Tibial artery (tissue), 4 donors: ENCODE measurements at regions of chr19 and their contacts with region 1.

Region 1: GRCh38 chr19:9768175-9769112 is at the start of gene ZNF846:
- DNase-seq: peak; percentile 91 to 95
- H3K4me3 ChIP-seq: peak within 1 kb of the TSS; percentile 69 to 70
- H3K27ac ChIP-seq: peak within 1 kb of the TSS; percentile 93 to 95
- H3K4me1 ChIP-seq: peaks cover 0 to 18% (median 13%) of the 10 kb centered on the region in 4 donors
- H3K27me3 ChIP-seq: no peaks in the 10 kb centered on the region
- CTCF ChIP-seq: no peak

Region 2: DNA sequence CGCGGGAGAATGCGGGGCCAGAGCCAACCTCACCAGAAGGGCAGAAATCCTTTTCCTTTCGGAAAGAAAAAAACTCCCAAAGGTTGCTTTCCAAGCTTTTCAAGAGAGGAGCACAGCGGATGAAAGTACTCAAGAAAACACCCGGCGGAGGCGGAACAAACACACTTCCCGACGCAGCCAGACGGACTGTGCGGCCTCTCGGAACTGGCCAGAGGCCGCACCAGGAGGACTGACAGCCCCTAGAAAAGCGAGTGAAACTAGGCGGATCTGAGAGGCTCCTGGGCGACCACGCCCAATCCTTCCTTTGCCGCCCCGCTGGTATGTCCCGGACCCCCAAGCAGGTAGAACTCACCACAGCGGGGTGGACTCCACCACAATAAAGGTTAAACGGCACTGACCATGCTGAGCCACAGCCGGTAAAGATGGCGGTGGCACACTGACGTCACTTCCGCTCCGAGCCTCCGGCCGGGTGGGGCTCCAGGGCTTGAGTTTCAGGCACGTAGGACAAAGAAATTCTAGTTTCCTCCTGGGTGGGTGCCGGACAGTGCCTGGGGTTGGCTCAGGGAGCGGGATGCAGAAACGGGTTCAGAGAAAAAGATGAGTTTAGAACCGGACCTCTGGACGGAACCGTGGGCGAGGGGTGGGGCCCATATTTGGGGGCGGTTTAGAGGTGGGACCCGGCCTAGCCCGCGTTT is 93.6 kb before region 1 on chr19 and contains the start of gene ZNF562:
- intact Hi-C with region 1: loop called (anchors 2 kb)
- DNase-seq: peak; percentile 76 to 89
- H3K4me3 ChIP-seq: peak within 1 kb of the TSS; percentile 71 to 86
- H3K27ac ChIP-seq: peak within 1 kb of the TSS; percentile 91 to 93
- H3K4me1 ChIP-seq: no peaks in the 10 kb centered on the region
- H3K27me3 ChIP-seq: no peaks in the 10 kb centered on the region
- CTCF ChIP-seq: no peak